A673 (cell line): ENCODE measurements at regions of chr19 and their contacts with region 1.

Region 1: DNA sequence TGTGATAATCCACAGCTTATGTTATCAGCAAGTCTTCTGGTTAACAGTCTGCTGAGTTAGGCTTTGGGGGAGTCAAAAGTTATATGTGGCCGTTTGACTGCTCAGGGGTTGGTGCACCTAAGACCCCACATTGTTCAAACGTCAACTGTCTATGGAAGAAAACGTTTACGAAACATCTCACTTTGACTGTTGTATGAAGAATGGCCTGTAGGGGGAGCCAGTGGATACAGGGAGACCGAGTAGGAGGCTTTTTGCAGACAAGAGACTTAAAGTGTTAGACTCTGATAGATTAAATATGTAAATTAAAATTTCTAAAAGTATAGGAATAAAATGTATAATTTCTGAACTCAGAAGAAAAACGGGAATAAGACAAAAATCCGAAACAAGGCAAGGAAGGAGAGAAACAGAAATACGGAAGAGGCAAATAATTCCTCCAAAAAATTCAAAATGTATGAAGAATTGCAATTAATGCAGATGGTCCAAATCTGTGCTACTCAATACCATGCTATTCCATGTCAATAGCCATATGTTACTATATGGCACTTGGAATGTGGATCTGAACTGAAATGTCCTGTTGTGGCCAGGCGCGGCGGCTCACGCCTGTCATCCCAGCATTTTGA is 37.8 kb downstream of the TNFSF14 start:
- DNase-seq: peak; percentile 86
- H3K4me3 ChIP-seq: no peak overlapping the region
- H3K27ac ChIP-seq: no peak overlapping the region
- H3K4me1 ChIP-seq: no peaks in the 10 kb centered on the region
- H3K27me3 ChIP-seq: no peaks in the 10 kb centered on the region
- CTCF ChIP-seq: peak; percentile 93

Region 2: GRCh38 chr19:6378041-6378440 is 254.1 kb before region 1 on chr19:
- CTCF ChIA-PET with region 1: interaction called, 15 read pairs
- POLR2A ChIA-PET with region 1: no interaction called
- intact Hi-C with region 1: no loop called
- DNase-seq: no peak
- H3K4me3 ChIP-seq: no peak overlapping the region
- H3K27ac ChIP-seq: no peak overlapping the region
- H3K4me1 ChIP-seq: peaks cover 8% of the 10 kb centered on the region
- H3K27me3 ChIP-seq: no peaks in the 10 kb centered on the region
- CTCF ChIP-seq: no peak

Region 3: GRCh38 chr19:6516659-6517291 is 115.3 kb before region 1 on chr19:
- CTCF ChIA-PET with region 1: interaction called, 3 read pairs
- POLR2A ChIA-PET with region 1: no interaction called
- intact Hi-C with region 1: loop called (anchors 2 kb)
- DNase-seq: peak; percentile 97
- H3K4me3 ChIP-seq: peak overlapping the region; percentile 64
- H3K27ac ChIP-seq: peak overlapping the region; percentile 72
- H3K4me1 ChIP-seq: peaks cover 4% of the 10 kb centered on the region
- H3K27me3 ChIP-seq: no peaks in the 10 kb centered on the region
- CTCF ChIP-seq: peak; percentile 99